HEK293T (cell line): ENCODE measurements at regions of chr13 and their contacts with region 1.

Region 1: GRCh38 chr13:102724923-102725322 is 30.1 kb upstream of the METTL21C start:
- DNase-seq: peak; percentile 25

Region 2: GRCh38 chr13:102580552-102581169 is 144.3 kb before region 1 on chr13:
- CTCF ChIA-PET with region 1: interaction called, 17 read pairs
- POLR2A ChIA-PET with region 1: no interaction called
- DNase-seq: peak; percentile 20